HEK293 (cell line): ENCODE measurements at regions of chr9 and their contacts with region 1.

Region 1: GRCh38 chr9:22008736-22009562 is at the start of gene CDKN2B:
- H3K4me3 ChIP-seq: peak within 1 kb of the TSS; percentile 95
- H3K27ac ChIP-seq: peak within 1 kb of the TSS; percentile 85
- H3K4me1 ChIP-seq: peaks cover 3% of the 10 kb centered on the region; the same call in 1 of the 2 replicates
- CTCF ChIP-seq: peak; percentile 96

Region 2: DNA sequence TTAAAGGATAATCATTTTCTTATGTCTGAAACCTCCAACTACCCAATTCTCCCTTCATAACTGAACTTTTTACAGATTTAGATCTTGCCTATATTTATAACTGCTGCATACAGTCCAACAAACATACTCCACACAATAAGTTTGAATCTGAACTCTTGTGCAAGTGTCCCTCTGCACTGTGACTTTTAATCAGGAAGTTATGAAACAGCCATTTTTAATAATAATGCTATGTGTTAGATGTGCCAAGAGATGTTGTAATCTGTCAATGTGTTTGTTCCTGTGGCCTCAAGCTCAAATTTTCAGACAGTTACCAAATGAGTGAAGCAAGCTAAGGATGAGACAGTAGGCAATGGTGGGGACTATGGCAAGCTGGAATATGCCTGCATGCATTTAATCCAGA is 264.1 kb before region 1 on chr9:
- CTCF ChIA-PET with region 1: no interaction called
- POLR2A ChIA-PET with region 1: no interaction called
- H3K4me3 ChIP-seq: no peak overlapping the region
- H3K27ac ChIP-seq: no peak overlapping the region
- H3K4me1 ChIP-seq: no peaks in the 10 kb centered on the region
- CTCF ChIP-seq: no peak

Region 3: GRCh38 chr9:21812946-21813568 is 195.9 kb before region 1 on chr9:
- CTCF ChIA-PET with region 1: interaction called, 75 read pairs
- POLR2A ChIA-PET with region 1: interaction called, 23 read pairs
- H3K4me3 ChIP-seq: no peak overlapping the region
- H3K27ac ChIP-seq: no peak overlapping the region; the same call in 1 of the 2 replicates
- H3K4me1 ChIP-seq: no peaks in the 10 kb centered on the region
- CTCF ChIP-seq: peak; percentile 71; the same call in 1 of the 2 replicates

Region 4: GRCh38 chr9:22030101-22030598 is 21.2 kb after region 1 on chr9:
- CTCF ChIA-PET with region 1: interaction called, 71 read pairs
- POLR2A ChIA-PET with region 1: interaction called, 12 read pairs
- H3K4me3 ChIP-seq: no peak overlapping the region
- H3K27ac ChIP-seq: no peak overlapping the region
- H3K4me1 ChIP-seq: no peaks in the 10 kb centered on the region; the same call in 1 of the 2 replicates
- CTCF ChIP-seq: no peak

Region 5: DNA sequence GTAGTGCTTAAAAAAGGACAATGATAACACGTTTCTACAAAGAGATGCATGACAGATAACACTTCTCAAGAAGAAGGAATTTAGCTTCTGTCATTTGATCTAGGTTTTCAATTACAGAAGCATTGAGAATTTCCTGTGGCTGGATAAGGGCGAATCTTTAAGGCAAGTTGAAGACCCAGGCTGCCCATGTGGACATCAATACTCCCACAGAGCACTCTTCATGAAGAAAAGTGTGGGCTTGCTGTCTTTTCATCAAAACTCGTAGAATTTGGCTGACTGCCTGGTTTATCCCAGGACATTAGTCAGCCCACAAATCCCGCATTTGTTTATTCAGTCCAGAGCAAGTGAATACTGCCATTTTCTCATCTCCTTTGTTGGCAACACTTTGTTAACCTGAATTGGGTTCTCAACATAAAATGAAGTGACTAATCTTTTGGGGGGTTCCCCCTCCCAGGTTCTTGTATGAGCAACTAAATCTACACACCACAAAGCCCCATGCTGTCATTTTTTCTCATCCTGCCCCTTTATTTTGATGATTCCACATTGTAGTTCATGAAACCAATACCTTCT is 43.5 kb after region 1 on chr9:
- CTCF ChIA-PET with region 1: interaction called, 12 read pairs
- POLR2A ChIA-PET with region 1: interaction called, 9 read pairs
- H3K4me3 ChIP-seq: no peak overlapping the region
- H3K27ac ChIP-seq: peak overlapping the region; percentile 64
- H3K4me1 ChIP-seq: peaks cover 15% of the 10 kb centered on the region
- CTCF ChIP-seq: no peak

Region 6: GRCh38 chr9:22119537-22120158 is 110.7 kb after region 1 on chr9:
- CTCF ChIA-PET with region 1: interaction called, 50 read pairs
- POLR2A ChIA-PET with region 1: interaction called, 55 read pairs
- H3K4me3 ChIP-seq: no peak overlapping the region
- H3K27ac ChIP-seq: no peak overlapping the region
- H3K4me1 ChIP-seq: peaks cover 14% of the 10 kb centered on the region; the same call in 1 of the 2 replicates
- CTCF ChIP-seq: no peak

Region 7: DNA sequence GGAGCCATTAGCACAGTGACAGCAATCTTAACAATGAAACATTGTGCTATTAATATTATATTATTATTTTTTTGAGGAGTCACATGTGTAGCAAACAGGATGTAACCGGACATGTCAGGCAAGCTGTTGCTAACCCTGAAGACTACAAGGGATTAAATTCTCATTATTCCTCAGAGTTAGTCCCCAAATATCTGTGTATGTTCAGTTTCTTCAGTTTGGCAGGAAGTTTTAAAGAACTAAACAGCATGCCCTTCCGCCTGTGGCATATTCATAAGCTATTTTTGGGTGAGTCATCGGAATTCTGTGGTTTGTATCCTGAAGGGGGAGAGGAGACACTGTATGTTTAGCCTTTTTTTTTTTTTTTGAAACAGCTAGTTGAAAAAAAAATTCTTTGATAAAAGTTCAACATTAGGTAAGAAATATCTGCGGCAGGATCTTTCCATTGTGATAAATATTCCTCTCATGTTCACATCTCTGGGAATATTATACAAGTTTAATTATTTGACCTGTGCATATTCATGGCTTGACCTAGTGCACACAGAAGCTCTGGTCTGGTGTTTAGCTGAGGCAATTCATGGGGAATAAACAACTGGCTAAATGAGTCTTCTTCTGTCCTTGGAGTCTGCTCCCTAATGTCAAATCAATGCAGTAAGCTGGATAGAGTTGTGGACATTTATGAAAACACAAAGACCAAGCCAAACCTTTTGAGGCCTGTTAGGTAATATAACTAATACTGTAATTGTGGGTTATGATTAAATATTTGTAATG is 202.8 kb after region 1 on chr9:
- CTCF ChIA-PET with region 1: interaction called, 11 read pairs
- POLR2A ChIA-PET with region 1: interaction called, 10 read pairs
- H3K4me3 ChIP-seq: no peak overlapping the region
- H3K27ac ChIP-seq: 0 out of 2 replicates have a peak overlapping the region, but pooled peaks have one; percentile 30
- H3K4me1 ChIP-seq: peaks cover 30% of the 10 kb centered on the region
- CTCF ChIP-seq: no peak

Region 8: GRCh38 chr9:22332202-22332601 is 323.3 kb after region 1 on chr9:
- CTCF ChIA-PET with region 1: no interaction called
- POLR2A ChIA-PET with region 1: no interaction called
- H3K4me3 ChIP-seq: no peak overlapping the region
- H3K27ac ChIP-seq: no peak overlapping the region
- H3K4me1 ChIP-seq: no peaks in the 10 kb centered on the region
- CTCF ChIP-seq: no peak

Region 9: DNA sequence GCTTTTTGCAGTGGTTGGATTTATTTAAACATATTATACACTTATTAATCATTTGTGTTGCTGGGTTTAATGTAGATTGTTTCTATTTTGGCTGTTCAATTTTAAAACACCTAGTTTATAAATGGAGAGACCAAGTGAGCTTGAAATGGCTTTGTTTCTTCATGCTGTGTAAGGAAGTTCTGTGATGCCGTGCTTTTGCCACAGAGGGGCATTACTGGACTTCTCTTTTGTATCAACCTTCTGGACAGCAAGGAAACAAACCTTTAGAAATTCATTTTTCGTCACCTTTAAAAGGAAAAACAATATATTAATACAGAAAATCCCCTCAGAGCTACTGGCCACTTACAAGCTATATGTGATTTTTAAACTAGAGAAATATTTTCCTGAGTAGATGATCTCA is 519.5 kb after region 1 on chr9:
- CTCF ChIA-PET with region 1: no interaction called
- POLR2A ChIA-PET with region 1: no interaction called
- H3K4me3 ChIP-seq: no peak overlapping the region
- H3K27ac ChIP-seq: no peak overlapping the region
- H3K4me1 ChIP-seq: no peaks in the 10 kb centered on the region
- CTCF ChIP-seq: no peak